H1 (cell line): ENCODE measurements at regions of chr20 and their contacts with region 1.

Region 1: DNA sequence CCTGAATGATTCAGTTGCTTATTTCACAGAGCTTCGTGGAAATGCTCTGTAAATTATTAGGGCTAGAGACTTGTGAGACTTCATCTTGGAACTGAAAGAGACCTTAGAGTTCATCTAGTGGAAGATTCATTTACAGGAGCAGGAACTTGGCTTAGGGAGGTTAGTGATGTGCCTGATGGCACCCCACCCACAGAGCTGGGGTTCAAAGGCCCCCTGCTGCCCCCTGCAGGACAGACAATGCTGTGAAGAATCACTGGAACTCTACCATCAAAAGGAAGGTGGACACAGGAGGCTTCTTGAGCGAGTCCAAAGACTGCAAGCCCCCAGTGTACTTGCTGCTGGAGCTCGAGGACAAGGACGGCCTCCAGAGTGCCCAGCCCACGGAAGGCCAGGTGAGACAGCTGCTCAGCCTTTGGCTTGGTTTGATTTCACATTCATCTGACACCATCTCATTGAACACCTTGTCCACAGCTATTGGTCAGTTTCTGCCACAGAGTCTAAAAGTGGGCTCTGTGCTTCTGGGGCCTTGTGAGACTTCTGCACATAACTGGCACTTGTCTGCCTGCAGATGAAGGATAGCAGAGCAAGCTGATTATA is 25.1 kb downstream of the MYBL2 start:
- DNase-seq: peak; percentile 25 to 78
- H3K4me3 ChIP-seq: no peak overlapping the region
- H3K27ac ChIP-seq: no peak overlapping the region
- H3K4me1 ChIP-seq: peaks cover 0 to 2% (median 0%) of the 10 kb centered on the region in 4 experiments; a peak in 1 of 7 replicates
- H3K27me3 ChIP-seq: no peaks in the 10 kb centered on the region
- CTCF ChIP-seq: peak; percentile 59 to 61 (median 61)
- EP300 ChIP-seq: no peak
- POLR2A ChIP-seq: no peak
- RAD21 ChIP-seq: peak; percentile 63 to 74

Region 2: DNA sequence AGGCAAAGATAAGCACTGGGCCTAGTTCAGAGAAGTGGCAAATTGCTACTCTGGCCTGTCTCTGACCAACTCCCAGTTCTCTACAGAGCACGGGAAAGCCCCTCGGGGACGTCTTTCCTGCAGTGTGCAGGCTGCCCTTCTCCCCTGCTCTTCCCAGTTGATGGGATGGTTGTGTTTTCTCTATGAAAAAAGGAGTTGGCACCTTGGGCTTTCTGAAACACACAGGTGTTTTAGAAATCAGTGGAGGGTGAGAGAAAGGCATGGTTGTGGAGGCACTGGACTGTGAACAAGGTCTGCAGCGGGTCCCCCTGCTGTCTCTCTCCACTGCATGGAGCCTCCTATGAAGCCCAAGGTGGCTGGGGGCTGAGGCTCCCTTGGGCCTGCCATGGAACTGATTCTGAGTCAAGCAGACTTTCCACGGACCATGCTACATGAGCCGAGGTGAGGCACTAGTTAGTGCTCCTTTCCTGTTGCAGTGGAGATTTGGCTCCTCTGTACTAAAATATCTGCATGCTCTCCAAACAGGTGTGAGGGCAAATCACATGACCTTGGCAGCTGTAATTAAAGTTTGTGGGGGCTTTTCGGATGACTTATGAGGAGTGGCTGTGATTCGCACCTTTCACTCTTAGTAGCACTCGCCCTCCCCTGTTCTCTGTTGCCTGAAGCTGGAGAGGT is 18.5 kb after region 1 on chr20:
- CTCF ChIA-PET with region 1: interaction called, 12 read pairs
- POLR2A ChIA-PET with region 1: interaction called, 3 read pairs
- DNase-seq: no peak
- H3K4me3 ChIP-seq: no peak overlapping the region
- H3K27ac ChIP-seq: no peak overlapping the region
- H3K4me1 ChIP-seq: no peaks in the 10 kb centered on the region
- H3K27me3 ChIP-seq: no peaks in the 10 kb centered on the region
- CTCF ChIP-seq: no peak
- EP300 ChIP-seq: no peak
- POLR2A ChIP-seq: no peak
- RAD21 ChIP-seq: no peak

Region 3: DNA sequence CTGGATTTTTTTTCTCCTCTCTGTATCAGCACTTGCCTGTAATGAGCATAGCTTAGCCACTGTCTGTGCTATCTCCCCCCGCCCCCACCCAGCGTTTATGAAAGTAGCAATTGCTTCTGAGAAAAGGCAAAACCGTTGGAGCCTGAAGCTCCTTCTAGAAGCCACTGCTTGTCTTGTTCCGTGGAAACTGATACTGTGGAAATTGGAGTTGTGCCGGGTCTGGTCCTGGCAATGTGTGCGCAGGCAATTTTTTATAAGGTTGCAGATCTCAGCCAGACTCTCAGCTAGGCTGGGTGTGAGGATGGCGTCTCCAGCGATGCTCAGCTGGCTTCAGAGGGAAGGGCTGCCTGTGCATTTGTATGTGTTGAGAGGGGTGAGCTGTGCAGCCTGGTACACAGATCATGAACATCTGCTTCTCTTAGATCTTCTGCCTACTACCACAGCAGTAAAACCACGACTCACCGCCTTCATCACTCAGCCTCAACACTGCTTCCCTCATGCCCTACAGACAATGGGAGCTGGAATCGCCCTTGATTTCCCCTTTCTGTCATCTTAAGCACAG is 107.2 kb after region 1 on chr20:
- CTCF ChIA-PET with region 1: no interaction called
- POLR2A ChIA-PET with region 1: no interaction called
- DNase-seq: no peak
- H3K4me3 ChIP-seq: no peak overlapping the region
- H3K27ac ChIP-seq: no peak overlapping the region
- H3K4me1 ChIP-seq: no peaks in the 10 kb centered on the region
- H3K27me3 ChIP-seq: no peaks in the 10 kb centered on the region
- CTCF ChIP-seq: no peak
- EP300 ChIP-seq: no peak
- POLR2A ChIP-seq: no peak
- RAD21 ChIP-seq: no peak